ENCODE measurements at regions of chr18 and their contacts with region 1.

Region 1: GRCh38 chr18:22694954-22695353 is 238.2 kb upstream of the RBBP8 start:
- DNase-seq: peak; percentile 30 to 43
- ATAC-seq: peak in 5 of 8 donors; percentile 56 to 93 (median 71)
- H3K4me3 ChIP-seq: peak overlapping the region in 1 of 10 donors; percentile 12
- H3K27ac ChIP-seq: peak overlapping the region in 1 of 10 donors; percentile 69
- H3K4me1 ChIP-seq: peaks cover 0 to 5% (median 0%) of the 10 kb centered on the region in 9 donors
- H3K27me3 ChIP-seq: no peaks in the 10 kb centered on the region
- CTCF ChIP-seq: no peak

Region 2: GRCh38 chr18:22471546-22472131 is 223.3 kb before region 1 on chr18:
- intact Hi-C with region 1: loop called in 1 of 10 experiments (anchors 10 kb)
- DNase-seq: peak; percentile 51 to 82
- ATAC-seq: peak; percentile 83 to 95 (median 90)
- H3K4me3 ChIP-seq: no peak overlapping the region
- H3K27ac ChIP-seq: peak overlapping the region; percentile 77 to 92 (median 84)
- H3K4me1 ChIP-seq: peaks cover 21 to 56% (median 51%) of the 10 kb centered on the region in 9 donors
- H3K27me3 ChIP-seq: no peaks in the 10 kb centered on the region
- CTCF ChIP-seq: no peak

Region 3: GRCh38 chr18:22579271-22579670 is 115.7 kb before region 1 on chr18:
- intact Hi-C with region 1: loop called in 2 of 10 experiments (anchors 5 to 10 kb)
- DNase-seq: no peak
- ATAC-seq: no peak
- H3K4me3 ChIP-seq: no peak overlapping the region
- H3K27ac ChIP-seq: no peak overlapping the region
- H3K4me1 ChIP-seq: no peaks in the 10 kb centered on the region
- H3K27me3 ChIP-seq: no peaks in the 10 kb centered on the region
- CTCF ChIP-seq: no peak

Region 4: GRCh38 chr18:22639026-22639463 is 55.9 kb before region 1 on chr18:
- intact Hi-C with region 1: no loop called
- DNase-seq: no peak
- ATAC-seq: no peak
- H3K4me3 ChIP-seq: no peak overlapping the region
- H3K27ac ChIP-seq: no peak overlapping the region
- H3K4me1 ChIP-seq: peaks cover 0 to 12% (median 0%) of the 10 kb centered on the region in 9 donors
- H3K27me3 ChIP-seq: no peaks in the 10 kb centered on the region
- CTCF ChIP-seq: no peak

Measured in heart right ventricle (tissue), 16 donors.